ENCODE measurements at regions of chr15 and their contacts with region 1.

Region 1: GRCh38 chr15:76495487-76495886 is 158.9 kb downstream of the ISL2 start:
- DNase-seq: no peak
- H3K4me3 ChIP-seq: no peak overlapping the region
- H3K27me3 ChIP-seq: no peaks in the 10 kb centered on the region
- CTCF ChIP-seq: no peak

Region 2: GRCh38 chr15:76341366-76342057 is 154.0 kb before region 1 on chr15:
- CTCF ChIA-PET with region 1: no interaction called
- POLR2A ChIA-PET with region 1: interaction called, 12 read pairs
- DNase-seq: no peak
- H3K4me3 ChIP-seq: peak overlapping the region; percentile 74
- H3K27me3 ChIP-seq: no peaks in the 10 kb centered on the region
- CTCF ChIP-seq: no peak

Region 3: GRCh38 chr15:76526111-76526510 is 30.6 kb after region 1 on chr15:
- CTCF ChIA-PET with region 1: no interaction called
- POLR2A ChIA-PET with region 1: no interaction called
- DNase-seq: no peak
- H3K4me3 ChIP-seq: no peak overlapping the region
- H3K27me3 ChIP-seq: no peaks in the 10 kb centered on the region
- CTCF ChIP-seq: no peak

Measured in BJ (cell line).